Endothelial cell of umbilical vein (primary cell): ENCODE measurements at regions of chr12 and their contacts with region 1.

Region 1: DNA sequence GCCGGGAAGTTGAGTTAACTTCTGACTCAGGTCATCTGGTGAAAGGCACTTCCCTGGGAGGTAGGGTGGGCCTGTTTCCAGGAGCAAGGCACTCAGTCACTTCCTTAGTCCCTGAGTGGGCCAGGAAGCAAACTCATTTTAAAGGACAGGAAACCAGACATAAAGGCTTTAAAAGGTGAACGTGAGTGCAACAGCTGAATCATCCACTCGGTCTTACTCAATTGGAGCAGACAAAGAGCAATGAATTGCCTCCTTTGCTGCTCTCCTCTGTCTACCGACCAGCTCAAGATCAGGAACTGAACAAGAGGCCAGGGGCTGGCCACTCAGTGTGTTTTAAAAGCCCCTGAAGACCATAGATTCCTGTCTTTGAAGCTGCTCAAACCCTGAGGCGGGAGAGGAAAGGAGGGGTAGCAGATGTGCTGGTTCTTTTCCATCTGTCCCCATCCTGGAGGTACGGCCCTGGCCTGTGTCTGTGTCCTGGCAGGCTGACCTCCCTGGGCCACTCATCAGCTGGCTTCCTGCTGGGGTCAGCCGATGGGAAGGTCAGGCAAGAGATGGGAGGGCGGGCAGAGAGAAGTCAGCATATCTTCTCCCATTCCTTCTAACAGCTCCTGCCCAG is 148.9 kb downstream of the PPM1H start:
- DNase-seq: peak; percentile 97
- H3K4me3 ChIP-seq: peak overlapping the region in 1 of 3 experiments; percentile 17
- H3K27ac ChIP-seq: peak overlapping the region; percentile 99
- H3K4me1 ChIP-seq: peaks cover 62% of the 10 kb centered on the region
- H3K27me3 ChIP-seq: no peaks in the 10 kb centered on the region
- CTCF ChIP-seq: no peak
- POLR2A ChIP-seq: peak; percentile 91

Region 2: GRCh38 chr12:62581288-62582064 is 204.6 kb before region 1 on chr12:
- CTCF ChIA-PET with region 1: interaction called, 31 read pairs
- POLR2A ChIA-PET with region 1: interaction called, 3 read pairs
- dilution Hi-C with region 1: no loop called
- intact Hi-C with region 1: no loop called
- DNase-seq: peak; percentile 58
- H3K4me3 ChIP-seq: no peak overlapping the region
- H3K27ac ChIP-seq: no peak overlapping the region
- H3K4me1 ChIP-seq: no peaks in the 10 kb centered on the region
- H3K27me3 ChIP-seq: no peaks in the 10 kb centered on the region
- CTCF ChIP-seq: peak; percentile 43 to 58
- POLR2A ChIP-seq: no peak

Region 3: GRCh38 chr12:62631471-62632410 is 154.3 kb before region 1 on chr12:
- CTCF ChIA-PET with region 1: interaction called, 6 read pairs
- POLR2A ChIA-PET with region 1: no interaction called
- dilution Hi-C with region 1: no loop called
- intact Hi-C with region 1: loop called (anchors 1 kb)
- DNase-seq: peak; percentile 68
- H3K4me3 ChIP-seq: peak overlapping the region; percentile 47 to 79 (median 63)
- H3K27ac ChIP-seq: peak overlapping the region; percentile 1
- H3K4me1 ChIP-seq: peaks cover 17% of the 10 kb centered on the region
- H3K27me3 ChIP-seq: no peaks in the 10 kb centered on the region
- CTCF ChIP-seq: peak; percentile 29 to 52
- POLR2A ChIP-seq: no peak

Region 4: GRCh38 chr12:62660756-62661155 is 125.3 kb before region 1 on chr12:
- CTCF ChIA-PET with region 1: interaction called, 3 read pairs
- POLR2A ChIA-PET with region 1: no interaction called
- dilution Hi-C with region 1: no loop called
- intact Hi-C with region 1: loop called (anchors 1 kb)
- DNase-seq: peak; percentile 84
- H3K4me3 ChIP-seq: no peak overlapping the region
- H3K27ac ChIP-seq: peak overlapping the region; percentile 55
- H3K4me1 ChIP-seq: peaks cover 27% of the 10 kb centered on the region
- H3K27me3 ChIP-seq: no peaks in the 10 kb centered on the region
- CTCF ChIP-seq: no peak
- POLR2A ChIP-seq: no peak

Region 5: DNA sequence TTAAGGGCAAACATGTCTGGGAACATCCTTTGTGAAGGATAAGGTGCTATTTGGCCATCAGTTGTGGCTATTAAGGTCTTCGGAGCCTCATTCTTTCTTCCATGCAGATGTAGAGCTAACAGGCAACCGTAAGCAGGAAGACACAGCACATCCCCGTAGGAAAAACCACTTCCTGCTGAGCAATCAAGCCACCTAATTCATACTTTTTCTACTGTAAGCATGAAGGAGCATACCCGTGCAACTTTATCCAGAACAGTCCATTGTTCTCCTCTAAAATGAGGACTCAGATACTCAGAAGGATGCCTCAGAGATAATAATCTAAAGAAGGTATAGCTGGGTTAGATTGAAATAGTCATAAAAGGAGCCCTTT is 83.1 kb before region 1 on chr12:
- CTCF ChIA-PET with region 1: interaction called, 6 read pairs
- POLR2A ChIA-PET with region 1: no interaction called
- dilution Hi-C with region 1: no loop called
- intact Hi-C with region 1: loop called (anchors 1 kb)
- DNase-seq: peak; percentile 59
- H3K4me3 ChIP-seq: no peak overlapping the region
- H3K27ac ChIP-seq: peak overlapping the region; percentile 57
- H3K4me1 ChIP-seq: peaks cover 35% of the 10 kb centered on the region
- H3K27me3 ChIP-seq: no peaks in the 10 kb centered on the region
- CTCF ChIP-seq: no peak
- POLR2A ChIP-seq: no peak

Region 6: GRCh38 chr12:62724947-62725447 is 61.1 kb before region 1 on chr12:
- CTCF ChIA-PET with region 1: interaction called, 5 read pairs
- POLR2A ChIA-PET with region 1: interaction called, 4 read pairs
- dilution Hi-C with region 1: no loop called
- intact Hi-C with region 1: loop called (anchors 1 kb)
- DNase-seq: peak; percentile 92
- H3K4me3 ChIP-seq: no peak overlapping the region
- H3K27ac ChIP-seq: peak overlapping the region; percentile 93
- H3K4me1 ChIP-seq: peaks cover 23% of the 10 kb centered on the region
- H3K27me3 ChIP-seq: no peaks in the 10 kb centered on the region
- CTCF ChIP-seq: no peak
- POLR2A ChIP-seq: no peak

Region 7: GRCh38 chr12:62731055-62731820 is 54.8 kb before region 1 on chr12:
- CTCF ChIA-PET with region 1: interaction called, 5 read pairs
- POLR2A ChIA-PET with region 1: interaction called, 6 read pairs
- dilution Hi-C with region 1: no loop called
- intact Hi-C with region 1: loop called (anchors 1 kb)
- DNase-seq: peak; percentile 49
- H3K4me3 ChIP-seq: no peak overlapping the region
- H3K27ac ChIP-seq: peak overlapping the region; percentile 42
- H3K4me1 ChIP-seq: peaks cover 34% of the 10 kb centered on the region
- H3K27me3 ChIP-seq: no peaks in the 10 kb centered on the region
- CTCF ChIP-seq: no peak
- POLR2A ChIP-seq: no peak